Pancreas (tissue), 10 donors: ENCODE measurements at regions of chr22 and their contacts with region 1.

Region 1: GRCh38 chr22:50030297-50031188 is 18.0 kb upstream of the IL17REL start:
- DNase-seq: peak; percentile 43 to 93 (median 80)
- ATAC-seq: peak; percentile 89 to 98 (median 97)
- H3K4me3 ChIP-seq: no peak overlapping the region
- H3K27ac ChIP-seq: no peak overlapping the region
- H3K4me1 ChIP-seq: no peaks in the 10 kb centered on the region
- H3K27me3 ChIP-seq: no peaks in the 10 kb centered on the region
- CTCF ChIP-seq: peak; percentile 35 to 91 (median 75)

Region 2: DNA sequence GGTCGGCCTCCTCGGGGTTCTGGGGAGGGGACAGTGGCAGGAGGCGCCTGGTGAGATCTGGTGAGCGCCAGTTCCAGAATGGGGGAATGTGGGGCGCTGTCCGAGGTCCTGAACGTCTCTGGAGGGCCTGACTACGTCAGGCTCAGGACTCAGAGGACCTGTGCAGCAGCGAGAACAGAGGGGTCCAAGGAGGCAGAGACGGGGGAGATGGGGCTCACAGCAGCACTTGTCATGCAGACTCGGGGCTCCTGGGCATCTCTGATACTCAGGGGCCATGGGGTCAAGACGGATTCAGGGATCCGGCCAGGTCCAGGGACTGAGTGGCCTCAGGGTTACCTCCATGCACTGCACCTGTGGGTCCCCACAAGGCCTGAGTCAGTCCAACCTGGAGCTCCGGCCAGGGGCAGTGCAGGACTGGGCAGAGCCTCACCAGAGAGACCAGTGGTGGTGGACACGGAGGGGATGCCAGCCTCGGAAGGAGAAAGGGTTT is 295.1 kb before region 1 on chr22:
- intact Hi-C with region 1: no loop called
- DNase-seq: peak in 2 of 6 donors; percentile 36 to 50
- ATAC-seq: peak in 1 of 4 donors; percentile 36
- H3K4me3 ChIP-seq: no peak overlapping the region
- H3K27ac ChIP-seq: no peak overlapping the region
- H3K4me1 ChIP-seq: no peaks in the 10 kb centered on the region
- H3K27me3 ChIP-seq: peaks cover 0 to 4% (median 0%) of the 10 kb centered on the region in 4 donors
- CTCF ChIP-seq: no peak

Region 3: GRCh38 chr22:49767355-49768062 is 263.0 kb before region 1 on chr22:
- intact Hi-C with region 1: loop called in 1 of 3 experiments (anchors 10 kb)
- DNase-seq: peak in 3 of 6 donors; percentile 13 to 27 (median 27)
- ATAC-seq: peak in 3 of 4 donors; percentile 41 to 75 (median 57)
- H3K4me3 ChIP-seq: no peak overlapping the region
- H3K27ac ChIP-seq: no peak overlapping the region
- H3K4me1 ChIP-seq: no peaks in the 10 kb centered on the region
- H3K27me3 ChIP-seq: no peaks in the 10 kb centered on the region
- CTCF ChIP-seq: peak; percentile 11 to 38 (median 23)

Region 4: GRCh38 chr22:49930739-49931412 is 99.7 kb before region 1 on chr22:
- intact Hi-C with region 1: loop called (anchors 2 to 10 kb)
- DNase-seq: peak; percentile 68 to 87 (median 79)
- ATAC-seq: peak; percentile 58 to 77 (median 74)
- H3K4me3 ChIP-seq: no peak overlapping the region
- H3K27ac ChIP-seq: peak overlapping the region in 2 of 4 donors; percentile 30 to 45
- H3K4me1 ChIP-seq: peaks cover 13 to 15% (median 14%) of the 10 kb centered on the region in 3 donors
- H3K27me3 ChIP-seq: no peaks in the 10 kb centered on the region
- CTCF ChIP-seq: peak in 3 of 4 donors; percentile 40 to 58 (median 54)

Region 5: DNA sequence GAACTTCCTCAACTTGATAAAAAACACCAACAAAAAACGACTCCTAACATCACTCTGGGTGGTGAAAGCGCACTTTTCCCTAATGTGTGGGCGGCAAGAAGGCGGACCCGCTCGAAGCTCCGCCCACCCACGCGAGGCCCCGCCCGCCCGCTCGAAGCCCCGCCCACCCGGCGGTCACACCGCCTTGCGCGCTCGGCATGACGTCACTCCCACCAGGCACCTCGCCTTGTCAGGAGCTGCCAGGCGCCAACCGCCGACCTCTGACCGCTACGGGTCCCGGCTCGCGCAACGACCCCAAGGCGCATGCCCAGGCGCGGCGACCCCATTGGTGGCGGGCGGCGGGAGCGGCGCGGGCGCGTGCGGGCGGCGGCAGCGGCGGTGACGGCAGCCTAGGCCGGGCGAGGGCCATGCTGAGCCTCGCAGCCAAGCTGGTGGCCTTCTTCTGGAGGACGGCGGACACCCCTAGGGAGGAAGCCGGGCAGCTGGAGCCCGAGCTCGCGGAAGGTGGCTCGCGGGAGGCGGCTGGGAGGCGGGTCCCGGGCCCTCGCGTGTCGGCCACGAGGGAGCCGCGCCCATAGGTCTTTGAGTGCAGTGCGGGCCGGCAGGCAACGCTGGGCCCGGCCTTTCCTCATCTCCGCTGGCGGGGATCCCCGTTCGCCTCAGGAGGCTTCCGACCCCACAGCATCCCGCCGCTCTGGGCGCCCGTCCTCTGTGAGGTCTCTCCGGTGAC is 59.3 kb after region 1 on chr22 and contains the start of gene MOV10L1:
- intact Hi-C with region 1: no loop called
- DNase-seq: peak in 5 of 6 donors; percentile 29 to 62 (median 50)
- ATAC-seq: peak in 3 of 4 donors; percentile 18 to 85 (median 25)
- H3K4me3 ChIP-seq: no peak within 1 kb of the TSS
- H3K27ac ChIP-seq: no peak within 1 kb of the TSS
- H3K4me1 ChIP-seq: no peaks in the 10 kb centered on the region
- H3K27me3 ChIP-seq: peaks cover 0 to 16% (median 0%) of the 10 kb centered on the region in 4 donors
- CTCF ChIP-seq: no peak
- total RNA-seq, gene MOV10L1: 0.09 to 1.9 (median 0.26) TPM in 5 of 6 donors, not detected in the other